Activated CD8-positive, alpha-beta T cell treated with anti-CD3 and anti-CD28 coated beads for 36 hours (primary cell): ENCODE measurements at regions of chr7 and their contacts with region 1.

Region 1: GRCh38 chr7:70975754-70976153 is 156.2 kb upstream of the GALNT17 start:
- DNase-seq: no peak
- ATAC-seq: no peak
- H3K4me3 Mint-ChIP-seq: no peak overlapping the region
- H3K27ac Mint-ChIP-seq: no peak overlapping the region
- H3K4me1 Mint-ChIP-seq: no peaks in the 10 kb centered on the region
- H3K27me3 Mint-ChIP-seq: no peaks in the 10 kb centered on the region
- CTCF ChIP-seq: no peak

Region 2: GRCh38 chr7:70953331-70953741 is 22.4 kb before region 1 on chr7:
- CTCF ChIA-PET with region 1: no interaction called
- POLR2A ChIA-PET with region 1: no interaction called
- intact Hi-C with region 1: loop called (anchors 1 kb)
- DNase-seq: no peak
- ATAC-seq: no peak
- H3K4me3 Mint-ChIP-seq: no peak overlapping the region
- H3K27ac Mint-ChIP-seq: no peak overlapping the region
- H3K4me1 Mint-ChIP-seq: no peaks in the 10 kb centered on the region
- H3K27me3 Mint-ChIP-seq: no peaks in the 10 kb centered on the region
- CTCF ChIP-seq: no peak